Activated CD4-positive, alpha-beta memory T cell treated with anti-CD3 and anti-CD28 coated beads for 36 hours (primary cell): ENCODE measurements at regions of chr4 and their contacts with region 1.

Region 1: GRCh38 chr4:123661080-123661737 is 264.6 kb downstream of the SPRY1 start:
- DNase-seq: no peak
- H3K4me3 Mint-ChIP-seq: no peak overlapping the region
- H3K27ac Mint-ChIP-seq: no peak overlapping the region
- H3K4me1 Mint-ChIP-seq: peaks cover 2% of the 10 kb centered on the region
- H3K27me3 Mint-ChIP-seq: peaks cover 11% of the 10 kb centered on the region

Region 2: GRCh38 chr4:123102897-123103471 is 558.2 kb before region 1 on chr4:
- CTCF ChIA-PET with region 1: interaction called, 7 read pairs
- POLR2A ChIA-PET with region 1: no interaction called
- intact Hi-C with region 1: loop called (anchors 10 kb)
- DNase-seq: no peak
- H3K4me3 Mint-ChIP-seq: no peak overlapping the region
- H3K27ac Mint-ChIP-seq: no peak overlapping the region
- H3K4me1 Mint-ChIP-seq: no peaks in the 10 kb centered on the region
- H3K27me3 Mint-ChIP-seq: no peaks in the 10 kb centered on the region

Region 3: DNA sequence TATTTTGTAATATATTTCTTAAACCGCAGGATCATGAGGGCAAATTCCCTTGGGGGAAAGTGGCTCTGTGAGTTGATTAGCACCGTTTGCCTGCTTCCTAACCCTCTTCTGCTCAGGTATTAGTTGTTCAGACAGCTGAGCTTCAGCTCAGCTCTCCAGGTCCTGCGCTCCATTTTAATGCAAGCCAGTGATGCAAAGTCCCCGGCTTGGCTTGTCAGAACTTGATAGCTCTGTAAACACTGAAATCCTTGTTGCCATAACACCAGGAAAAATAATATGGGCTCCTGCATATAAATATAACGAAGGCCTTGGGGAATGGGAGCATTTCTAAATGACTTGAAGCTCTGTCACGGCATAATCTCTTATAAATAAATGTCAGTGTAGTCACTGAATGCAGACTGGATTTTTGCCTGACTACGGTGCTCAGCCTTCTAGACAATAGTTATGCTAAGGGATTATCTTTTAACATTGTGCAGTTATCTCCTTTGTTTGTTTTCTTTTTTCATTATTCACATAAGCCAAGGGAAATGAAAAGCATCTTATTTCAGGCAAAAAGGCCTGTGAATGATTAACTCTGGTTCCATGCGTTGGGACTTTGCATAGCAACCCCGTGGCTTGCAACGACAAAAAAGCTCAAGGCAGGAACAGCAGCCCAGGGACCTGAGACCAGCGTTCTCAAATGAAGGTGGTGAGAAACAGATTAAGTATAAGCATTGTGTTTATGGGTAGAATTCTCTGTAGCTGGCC is 11.4 kb before region 1 on chr4:
- CTCF ChIA-PET with region 1: no interaction called
- POLR2A ChIA-PET with region 1: no interaction called
- intact Hi-C with region 1: no loop called
- DNase-seq: no peak
- H3K4me3 Mint-ChIP-seq: no peak overlapping the region
- H3K27ac Mint-ChIP-seq: no peak overlapping the region
- H3K4me1 Mint-ChIP-seq: no peaks in the 10 kb centered on the region
- H3K27me3 Mint-ChIP-seq: peaks cover 2% of the 10 kb centered on the region

Region 4: DNA sequence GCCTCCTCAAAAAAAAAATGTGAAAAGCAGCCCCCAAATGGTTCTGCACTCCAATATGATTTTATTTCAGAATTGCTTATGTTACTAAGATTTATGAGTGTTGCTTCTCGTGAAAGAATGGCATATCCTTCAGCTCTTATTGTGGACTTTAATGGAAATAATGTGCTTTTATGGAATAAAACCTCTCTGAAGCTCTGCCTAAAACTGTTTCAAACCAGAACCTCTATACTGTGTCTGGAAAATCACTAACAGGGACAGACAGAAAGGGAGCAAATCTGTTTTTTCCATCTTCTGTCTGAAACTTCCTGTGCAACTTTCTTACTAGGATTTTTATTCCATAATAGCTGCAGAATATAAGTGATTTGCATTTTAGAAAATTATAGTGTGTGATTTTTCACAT is 558.2 kb after region 1 on chr4:
- CTCF ChIA-PET with region 1: no interaction called
- POLR2A ChIA-PET with region 1: no interaction called
- intact Hi-C with region 1: no loop called
- DNase-seq: no peak
- H3K4me3 Mint-ChIP-seq: no peak overlapping the region
- H3K27ac Mint-ChIP-seq: no peak overlapping the region
- H3K4me1 Mint-ChIP-seq: no peaks in the 10 kb centered on the region
- H3K27me3 Mint-ChIP-seq: no peaks in the 10 kb centered on the region